AG04449 (cell line): ENCODE measurements at regions of chr6 and their contacts with region 1.

Region 1: DNA sequence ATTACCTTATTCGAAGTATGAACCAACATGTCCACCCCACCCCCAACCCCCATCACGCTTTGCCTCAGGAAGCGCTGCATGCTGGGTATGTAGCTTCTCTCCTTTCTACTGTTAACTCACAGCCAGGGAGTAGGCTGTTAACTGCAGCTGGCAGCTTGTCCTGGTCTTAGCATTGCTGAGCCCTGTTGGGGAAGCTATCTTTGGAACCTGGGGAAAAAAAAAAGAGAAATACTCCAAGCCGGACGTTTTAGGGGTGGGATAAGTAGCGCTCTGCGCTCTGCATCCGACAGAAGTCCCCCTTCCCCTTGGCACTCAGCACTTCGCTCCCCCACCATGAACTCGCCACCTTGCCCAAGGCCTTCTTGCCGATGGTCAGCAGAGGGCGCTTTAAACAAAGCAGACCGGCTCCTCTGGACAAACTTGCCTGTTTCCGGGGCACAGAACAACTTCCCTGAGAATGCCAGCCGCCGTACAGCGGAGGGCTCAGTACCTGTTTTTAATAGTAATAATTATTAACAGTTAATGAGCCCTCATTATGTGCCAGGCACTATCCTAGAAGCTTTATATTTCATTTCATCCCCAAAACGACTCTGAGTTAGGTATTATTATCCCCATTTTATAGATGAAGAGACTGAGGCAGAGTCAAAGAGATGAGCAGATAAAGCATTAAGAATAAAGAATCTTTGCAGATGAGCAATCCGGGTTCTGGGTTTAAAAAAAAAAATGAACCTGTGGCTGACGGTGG is 35.2 kb upstream of the MDFI start:
- DNase-seq: no peak
- H3K4me3 ChIP-seq: no peak overlapping the region; the same call in 1 of the 2 replicates
- CTCF ChIP-seq: peak; percentile 95

Region 2: GRCh38 chr6:41463062-41463930 is 139.7 kb before region 1 on chr6:
- CTCF ChIA-PET with region 1: interaction called, 29 read pairs
- POLR2A ChIA-PET with region 1: no interaction called
- DNase-seq: no peak
- H3K4me3 ChIP-seq: no peak overlapping the region
- CTCF ChIP-seq: peak; percentile 59

Region 3: DNA sequence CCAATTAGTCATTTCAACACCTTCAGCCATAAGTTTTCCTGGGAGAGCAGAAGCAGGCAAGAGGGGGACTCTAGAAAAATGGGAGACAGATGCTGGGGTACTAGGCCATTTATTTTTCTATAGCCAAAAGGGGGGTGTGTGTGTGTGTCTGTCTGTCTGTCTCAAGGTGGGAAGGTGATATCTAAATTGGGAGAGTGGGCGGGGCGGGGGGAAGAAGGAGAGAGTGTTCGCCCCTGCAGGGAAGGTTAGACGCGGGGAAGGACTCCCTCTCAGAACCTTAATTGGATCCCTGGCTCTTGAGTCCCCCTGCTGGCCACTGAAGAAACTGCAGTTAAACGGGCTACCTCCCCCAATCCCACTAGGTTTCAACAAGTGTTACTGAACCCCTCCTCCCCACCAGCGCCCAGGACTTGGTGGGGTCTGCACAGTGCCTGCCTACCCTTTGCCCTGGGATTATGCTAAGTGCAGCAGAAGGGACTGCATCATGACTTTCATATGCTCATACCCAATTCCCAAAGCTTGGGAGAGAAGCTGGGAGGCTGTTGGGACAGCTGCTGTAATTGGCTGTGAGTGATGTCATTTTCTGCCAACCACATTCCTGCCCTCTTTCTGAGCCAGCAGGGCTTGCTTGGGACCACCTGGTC is 11.1 kb before region 1 on chr6:
- CTCF ChIA-PET with region 1: interaction called, 121 read pairs
- POLR2A ChIA-PET with region 1: no interaction called
- DNase-seq: no peak
- H3K4me3 ChIP-seq: no peak overlapping the region
- CTCF ChIP-seq: peak; percentile 86

Region 4: GRCh38 chr6:41625442-41625841 is 22.4 kb after region 1 on chr6:
- CTCF ChIA-PET with region 1: interaction called, 22 read pairs
- POLR2A ChIA-PET with region 1: no interaction called
- DNase-seq: no peak
- H3K4me3 ChIP-seq: no peak overlapping the region
- CTCF ChIP-seq: no peak

Region 5: GRCh38 chr6:41697861-41698781 is 95.1 kb after region 1 on chr6:
- CTCF ChIA-PET with region 1: interaction called, 10 read pairs
- POLR2A ChIA-PET with region 1: no interaction called
- DNase-seq: peak; percentile 95
- H3K4me3 ChIP-seq: peak overlapping the region; percentile 13
- CTCF ChIP-seq: no peak

Region 6: DNA sequence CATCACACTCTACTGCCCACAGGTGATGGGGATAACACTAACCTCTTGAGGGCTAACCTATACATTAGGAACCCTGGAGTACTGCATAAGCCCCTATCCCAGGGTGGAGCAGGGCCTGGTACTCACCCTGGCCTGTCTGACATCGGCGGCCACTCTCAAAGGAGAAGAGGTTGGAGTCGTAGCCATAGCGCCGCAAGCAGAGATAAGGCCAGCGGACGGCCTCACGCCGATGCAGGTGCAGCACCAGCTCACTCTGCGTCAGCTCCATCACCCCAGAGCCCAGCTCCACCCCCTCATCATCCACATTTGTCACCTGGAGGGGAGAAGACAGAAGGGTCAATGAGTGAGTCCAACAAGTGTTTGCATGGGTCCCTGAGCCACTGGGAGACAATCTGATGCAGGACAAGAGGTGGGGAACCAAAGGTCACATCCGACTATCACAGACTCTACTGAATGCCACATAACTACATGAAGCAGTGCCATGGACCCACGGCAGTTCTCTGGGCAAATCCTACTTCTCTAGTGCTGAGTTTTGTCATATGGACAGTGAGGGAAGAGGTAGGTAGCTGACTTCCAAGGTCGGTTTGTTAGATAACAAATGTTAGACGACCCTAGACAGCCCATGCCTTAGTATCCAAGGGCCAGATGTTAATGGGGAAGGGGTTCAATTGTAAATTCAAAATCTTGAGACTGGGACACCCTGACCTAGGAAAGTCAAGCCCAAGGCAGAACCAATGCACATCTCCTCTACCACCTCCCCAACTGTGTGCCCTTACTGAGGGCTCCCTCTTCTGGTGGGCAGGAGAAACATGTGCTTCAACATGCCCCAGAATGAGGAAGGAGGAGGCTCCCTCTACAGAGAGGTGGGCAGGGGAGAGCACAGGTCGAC is 172.5 kb after region 1 on chr6:
- CTCF ChIA-PET with region 1: interaction called, 41 read pairs
- POLR2A ChIA-PET with region 1: no interaction called
- DNase-seq: no peak
- H3K4me3 ChIP-seq: no peak overlapping the region
- CTCF ChIP-seq: peak; percentile 89

Region 7: DNA sequence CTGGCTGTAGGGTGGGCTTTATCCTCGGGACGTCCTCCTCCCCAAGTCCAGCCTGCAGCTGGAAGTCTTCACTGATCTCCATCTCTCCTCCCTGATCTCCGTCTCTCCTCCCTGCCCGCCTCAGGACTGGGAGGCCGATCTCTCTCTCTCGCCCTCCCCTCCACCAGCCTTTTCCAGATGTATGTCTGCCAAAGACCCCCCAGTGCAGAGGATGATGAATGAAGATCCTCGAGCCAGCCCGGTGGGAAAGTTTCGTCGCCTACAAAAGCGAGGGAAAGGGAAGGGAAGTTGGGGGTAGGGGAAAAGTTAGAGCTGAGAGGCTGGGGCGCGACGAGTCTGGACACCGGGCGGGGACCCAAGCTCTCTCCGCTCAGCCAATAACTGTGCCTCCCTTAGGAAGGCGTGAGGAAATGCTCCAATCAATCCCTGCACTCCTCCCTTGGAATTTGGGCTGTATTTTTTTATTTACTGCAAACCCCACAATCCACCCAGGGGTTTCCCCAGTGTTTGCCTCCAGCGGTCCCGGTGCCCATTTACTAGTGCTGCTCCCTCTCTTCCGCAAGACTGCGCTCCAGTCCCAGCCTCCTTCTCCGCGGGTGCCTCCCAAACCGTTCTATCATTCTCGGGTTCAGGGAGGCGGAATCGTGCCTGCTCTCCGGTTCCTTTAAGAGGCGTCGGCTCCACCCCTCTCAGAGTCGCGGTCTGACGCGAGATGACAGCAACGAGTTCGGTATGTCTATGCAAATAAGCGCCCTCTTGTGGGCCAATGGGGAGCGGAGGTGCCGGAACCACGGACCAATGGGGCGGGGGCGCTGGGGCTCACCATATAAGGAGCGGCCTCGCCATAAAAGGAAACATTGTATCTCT is 1567.6 kb after region 1 on chr6 and contains the start of gene SRF:
- CTCF ChIA-PET with region 1: no interaction called
- POLR2A ChIA-PET with region 1: no interaction called
- DNase-seq: peak; percentile 97
- H3K4me3 ChIP-seq: peak within 1 kb of the TSS; percentile 99
- CTCF ChIP-seq: peak; percentile 29